ENCODE measurements at regions of chr5 and their contacts with region 1.

Region 1: GRCh38 chr5:115467628-115468027 is 76.9 kb downstream of the FEM1C start:
- DNase-seq: no peak
- H3K4me3 Mint-ChIP-seq: peak overlapping the region; percentile 46
- H3K27ac Mint-ChIP-seq: peak overlapping the region; percentile 90
- H3K4me1 Mint-ChIP-seq: peaks cover 51% of the 10 kb centered on the region
- H3K27me3 Mint-ChIP-seq: no peaks in the 10 kb centered on the region
- CTCF ChIP-seq: no peak

Region 2: DNA sequence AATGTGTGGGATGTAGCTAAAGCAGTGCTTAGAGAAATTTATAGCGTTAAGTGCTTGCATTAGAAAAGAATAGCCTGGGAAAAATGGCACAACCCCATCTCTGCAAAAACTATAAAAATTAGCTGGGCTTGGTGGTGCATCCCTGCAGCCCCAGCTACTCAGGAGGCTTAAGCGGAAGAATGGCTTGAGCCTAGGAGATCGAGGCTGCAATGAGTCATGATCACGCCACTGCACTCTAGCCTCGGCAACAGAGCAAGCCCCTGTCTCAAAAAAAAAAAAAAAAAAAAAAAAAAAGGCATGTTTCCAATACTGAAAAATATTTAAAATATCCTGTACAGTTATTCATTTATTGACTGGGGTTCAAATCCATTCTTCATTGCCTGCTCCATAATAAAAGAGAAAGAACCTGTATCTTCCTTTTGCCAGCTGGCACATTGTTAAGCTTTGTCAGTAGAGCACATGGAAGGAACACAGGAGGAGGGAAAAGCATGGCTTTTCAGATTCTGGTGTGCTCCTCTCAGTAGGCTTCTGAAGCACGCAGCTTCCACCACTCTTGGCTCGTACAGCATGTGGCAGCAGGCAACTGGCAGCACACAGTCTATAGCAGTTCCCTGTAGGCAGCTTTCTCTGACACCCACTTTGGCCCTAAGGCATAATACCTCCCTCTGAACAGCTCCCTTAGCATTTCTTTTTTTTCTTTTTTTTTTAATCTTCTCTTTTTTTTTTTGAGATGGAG is 371.4 kb before region 1 on chr5:
- CTCF ChIA-PET with region 1: no interaction called
- intact Hi-C with region 1: no loop called
- DNase-seq: no peak
- H3K4me3 Mint-ChIP-seq: no peak overlapping the region
- H3K27ac Mint-ChIP-seq: no peak overlapping the region
- H3K4me1 Mint-ChIP-seq: no peaks in the 10 kb centered on the region
- H3K27me3 Mint-ChIP-seq: peaks cover 16% of the 10 kb centered on the region
- CTCF ChIP-seq: no peak

Region 3: DNA sequence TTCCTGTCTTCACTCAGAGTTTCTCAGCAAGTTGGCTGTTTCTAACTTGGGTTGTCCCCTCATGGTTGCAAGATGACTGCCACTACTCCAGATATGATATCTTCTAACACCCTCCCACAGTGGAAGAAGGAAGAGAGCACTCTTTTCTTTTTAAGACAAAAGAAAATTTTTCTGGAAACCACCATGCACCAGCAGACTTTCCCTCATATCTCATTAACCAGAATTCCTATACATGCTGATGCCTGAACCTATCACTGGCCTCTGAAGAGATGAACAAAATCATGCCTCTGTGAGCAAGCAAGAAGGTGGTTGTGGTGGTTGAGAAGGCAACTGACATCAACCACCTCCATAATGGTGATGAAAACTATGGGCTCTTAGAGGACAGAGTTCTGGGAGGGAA is 20.1 kb after region 1 on chr5:
- CTCF ChIA-PET with region 1: no interaction called
- intact Hi-C with region 1: no loop called
- DNase-seq: no peak
- H3K4me3 Mint-ChIP-seq: no peak overlapping the region
- H3K27ac Mint-ChIP-seq: no peak overlapping the region
- H3K4me1 Mint-ChIP-seq: peaks cover 24% of the 10 kb centered on the region
- H3K27me3 Mint-ChIP-seq: no peaks in the 10 kb centered on the region
- CTCF ChIP-seq: no peak

Region 4: GRCh38 chr5:115530426-115530825 is 62.8 kb after region 1 on chr5:
- CTCF ChIA-PET with region 1: no interaction called
- intact Hi-C with region 1: loop called (anchors 2 kb)
- DNase-seq: no peak
- H3K4me3 Mint-ChIP-seq: peak overlapping the region; percentile 69
- H3K27ac Mint-ChIP-seq: peak overlapping the region; percentile 85
- H3K4me1 Mint-ChIP-seq: peaks cover 75% of the 10 kb centered on the region
- H3K27me3 Mint-ChIP-seq: no peaks in the 10 kb centered on the region
- CTCF ChIP-seq: no peak

Region 5: DNA sequence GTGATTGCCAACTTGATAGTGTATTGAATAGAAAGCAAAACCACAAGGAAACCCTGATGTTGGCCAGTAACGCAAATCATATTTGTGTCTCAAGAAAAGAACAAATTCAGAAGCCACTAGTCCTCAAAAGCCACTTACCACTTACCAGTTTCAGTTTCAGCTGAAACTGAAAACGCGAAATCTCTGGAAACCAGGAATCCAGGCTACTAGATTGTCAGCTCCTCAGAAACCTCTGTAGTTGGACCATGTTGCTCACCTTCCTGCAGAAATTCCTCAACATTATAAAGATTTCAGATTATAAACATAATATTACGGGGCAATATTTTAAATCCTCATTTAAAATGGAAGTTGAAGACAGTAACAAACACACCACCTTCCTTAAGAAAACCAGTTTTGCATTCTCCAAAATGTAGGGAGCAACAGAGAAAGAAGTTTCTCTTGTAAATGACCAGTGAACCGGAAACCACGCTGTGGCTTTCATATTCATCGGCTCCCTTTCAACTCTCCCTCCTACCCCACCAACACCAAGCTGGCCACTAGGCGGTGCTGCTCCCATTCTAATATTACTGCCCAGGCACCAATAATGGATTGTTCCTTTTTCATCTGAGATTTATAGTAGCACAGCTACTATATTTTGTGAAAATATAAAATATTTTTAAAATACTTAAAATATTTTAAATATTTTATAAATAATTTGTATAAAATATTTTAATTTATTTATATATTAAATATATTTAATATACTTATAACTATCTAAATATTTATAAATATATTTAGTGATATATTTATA is 166.9 kb after region 1 on chr5:
- CTCF ChIA-PET with region 1: no interaction called
- intact Hi-C with region 1: no loop called
- DNase-seq: peak; percentile 91
- H3K4me3 Mint-ChIP-seq: peak overlapping the region; percentile 36
- H3K27ac Mint-ChIP-seq: peak overlapping the region; percentile 68
- H3K4me1 Mint-ChIP-seq: no peaks in the 10 kb centered on the region
- H3K27me3 Mint-ChIP-seq: no peaks in the 10 kb centered on the region
- CTCF ChIP-seq: peak; percentile 86

Measured in Calu3 (cell line).